ENCODE measurements at regions of chr7 and their contacts with region 1.

Region 1: GRCh38 chr7:82234457-82235049 is 209.0 kb downstream of the CACNA2D1 start:
- DNase-seq: no peak
- ATAC-seq: no peak
- H3K4me3 ChIP-seq: no peak overlapping the region
- H3K4me1 ChIP-seq: no peaks in the 10 kb centered on the region
- CTCF ChIP-seq: no peak

Region 2: GRCh38 chr7:82572195-82572880 is 337.8 kb after region 1 on chr7:
- intact Hi-C with region 1: loop called in 1 of 2 experiments (anchors 5 kb)
- DNase-seq: peak in 2 of 3 donors; percentile 71 to 95
- ATAC-seq: peak; percentile 84
- H3K4me3 ChIP-seq: no peak overlapping the region
- H3K4me1 ChIP-seq: no peaks in the 10 kb centered on the region
- CTCF ChIP-seq: peak; percentile 80

Region 3: GRCh38 chr7:82729172-82730030 is 494.8 kb after region 1 on chr7:
- intact Hi-C with region 1: loop called in 1 of 2 experiments (anchors 10 kb)
- DNase-seq: peak in 1 of 3 donors; percentile 36
- ATAC-seq: no peak
- H3K4me3 ChIP-seq: no peak overlapping the region
- H3K4me1 ChIP-seq: no peaks in the 10 kb centered on the region
- CTCF ChIP-seq: peak; percentile 20